AG04450 (cell line): ENCODE measurements at regions of chr5 and their contacts with region 1.

Region 1: DNA sequence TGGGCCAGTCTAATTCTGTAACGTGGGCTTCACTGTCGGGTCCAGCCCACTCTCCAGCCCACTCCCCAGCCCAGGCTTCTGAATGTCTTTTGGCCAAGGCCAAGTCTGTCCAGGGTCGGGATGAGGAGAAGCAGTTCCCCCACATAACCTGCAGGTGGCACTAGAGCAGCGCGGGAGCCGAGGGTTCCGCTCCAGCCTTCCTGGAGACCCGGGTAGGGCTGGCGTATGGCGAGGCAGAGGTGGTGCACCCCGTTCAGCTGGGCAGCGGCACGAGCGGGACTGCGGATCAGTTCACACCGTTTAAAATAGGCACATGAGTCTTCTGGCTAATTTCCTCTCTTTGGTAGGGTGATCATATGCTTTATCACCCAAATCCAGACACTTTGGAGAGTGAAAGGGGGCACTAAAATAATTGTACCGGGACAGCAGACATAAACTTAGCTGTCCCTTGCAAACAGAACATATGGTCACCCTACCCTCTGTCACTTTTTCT is 185.9 kb downstream of the MSX2 start:
- DNase-seq: peak; percentile 11
- H3K4me3 ChIP-seq: no peak overlapping the region
- H3K27ac ChIP-seq: no peak overlapping the region
- H3K27me3 ChIP-seq: no peaks in the 10 kb centered on the region
- CTCF ChIP-seq: peak; percentile 86

Region 2: DNA sequence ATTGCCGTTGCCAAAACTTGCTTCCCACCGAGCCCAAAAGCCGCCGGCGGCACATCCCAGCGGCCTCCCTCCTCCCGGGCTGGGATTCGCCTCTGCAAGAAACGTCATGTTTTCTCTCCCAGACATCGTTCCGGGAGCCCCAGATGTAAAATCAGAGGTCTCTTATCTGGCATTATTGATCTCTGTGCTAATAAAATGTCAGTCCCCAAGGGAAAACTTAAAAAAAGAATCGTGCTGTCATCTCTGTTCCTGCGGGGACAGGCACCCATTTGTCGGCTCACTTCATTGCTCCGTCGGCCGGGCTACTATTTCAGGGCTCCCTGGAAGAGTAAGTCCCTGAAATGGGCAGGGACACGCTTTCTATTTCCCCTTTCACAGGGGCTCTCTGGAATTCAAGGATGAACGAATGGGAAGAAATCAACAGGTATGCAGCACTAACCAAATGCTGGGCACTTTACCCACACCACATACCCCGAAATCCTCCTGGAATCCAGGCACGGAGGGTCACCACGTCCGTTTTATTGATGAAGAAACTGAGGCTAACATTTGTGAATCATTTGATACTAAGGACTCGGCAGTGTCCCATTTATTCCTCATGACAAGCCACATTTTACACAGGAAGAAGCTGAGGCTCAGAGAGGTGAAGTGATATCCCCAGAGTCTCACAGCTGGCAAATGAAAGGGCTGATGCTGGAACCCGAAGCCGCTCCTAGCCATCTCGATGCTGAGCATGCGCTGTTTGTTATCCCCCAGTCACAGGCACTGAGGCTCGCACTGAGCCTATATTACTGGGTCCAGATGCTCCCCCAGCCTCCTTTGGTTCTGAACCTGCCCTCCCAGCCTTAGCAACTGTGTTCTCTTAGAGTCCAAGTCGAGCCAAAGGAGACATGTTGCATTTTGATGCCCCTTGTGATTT is 221.6 kb before region 1 on chr5:
- CTCF ChIA-PET with region 1: no interaction called
- POLR2A ChIA-PET with region 1: no interaction called
- DNase-seq: no peak
- H3K4me3 ChIP-seq: no peak overlapping the region
- H3K27ac ChIP-seq: no peak overlapping the region
- H3K27me3 ChIP-seq: peaks cover 52% of the 10 kb centered on the region
- CTCF ChIP-seq: no peak

Region 3: DNA sequence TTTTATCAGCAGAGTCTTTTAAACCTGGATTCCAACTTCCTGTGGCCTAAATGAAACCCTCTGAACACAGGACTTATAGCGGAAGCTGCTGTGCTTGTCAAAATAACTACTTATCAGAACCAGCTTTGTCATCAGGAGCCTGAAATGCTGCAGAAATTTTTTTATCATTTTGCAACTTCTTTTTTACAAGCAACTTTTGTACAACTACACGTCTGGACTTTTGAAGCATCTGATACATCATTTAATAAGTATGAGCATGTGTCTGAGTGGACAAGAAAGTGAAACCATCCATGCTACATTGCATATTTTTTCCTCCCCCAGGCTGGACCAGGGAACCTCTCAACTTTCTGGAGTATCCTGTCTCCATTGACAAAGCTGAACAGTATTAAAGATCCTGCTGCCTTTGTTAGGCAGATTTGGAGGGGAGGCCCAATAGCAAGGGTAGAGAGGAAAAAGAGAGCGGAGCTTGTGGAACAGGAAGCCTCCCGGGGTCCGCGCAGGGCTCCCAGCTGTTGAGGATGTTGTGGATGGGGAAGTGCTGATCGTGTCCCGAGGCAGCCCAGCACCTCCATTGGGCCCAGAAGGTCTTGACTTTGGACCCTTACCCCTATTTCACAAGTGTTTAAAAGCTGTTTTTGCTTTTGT is 10.7 kb after region 1 on chr5:
- CTCF ChIA-PET with region 1: interaction called, 15 read pairs
- POLR2A ChIA-PET with region 1: no interaction called
- DNase-seq: no peak
- H3K4me3 ChIP-seq: no peak overlapping the region
- H3K27ac ChIP-seq: no peak overlapping the region
- H3K27me3 ChIP-seq: no peaks in the 10 kb centered on the region
- CTCF ChIP-seq: no peak

Region 4: GRCh38 chr5:174935854-174936474 is 25.7 kb after region 1 on chr5:
- CTCF ChIA-PET with region 1: interaction called, 15 read pairs
- POLR2A ChIA-PET with region 1: no interaction called
- DNase-seq: peak; percentile 13
- H3K4me3 ChIP-seq: no peak overlapping the region
- H3K27ac ChIP-seq: no peak overlapping the region
- H3K27me3 ChIP-seq: no peaks in the 10 kb centered on the region
- CTCF ChIP-seq: peak; percentile 94

Region 5: GRCh38 chr5:174987443-174988012 is 77.2 kb after region 1 on chr5:
- CTCF ChIA-PET with region 1: no interaction called
- POLR2A ChIA-PET with region 1: no interaction called
- DNase-seq: no peak
- H3K4me3 ChIP-seq: no peak overlapping the region
- H3K27ac ChIP-seq: no peak overlapping the region
- H3K27me3 ChIP-seq: no peaks in the 10 kb centered on the region
- CTCF ChIP-seq: no peak

Region 6: GRCh38 chr5:175092691-175093090 is 182.4 kb after region 1 on chr5:
- CTCF ChIA-PET with region 1: no interaction called
- POLR2A ChIA-PET with region 1: no interaction called
- DNase-seq: no peak
- H3K4me3 ChIP-seq: no peak overlapping the region
- H3K27ac ChIP-seq: no peak overlapping the region
- H3K27me3 ChIP-seq: peaks cover 2% of the 10 kb centered on the region
- CTCF ChIP-seq: no peak